Activated CD4-positive, alpha-beta T cell treated with anti-CD3 and anti-CD28 coated beads, Interleukin-2, amount 10 ng/mL, durations not matched to agents 24 days and 14 days (primary cell): ENCODE measurements at regions of chr2 and their contacts with region 1.

Region 1: DNA sequence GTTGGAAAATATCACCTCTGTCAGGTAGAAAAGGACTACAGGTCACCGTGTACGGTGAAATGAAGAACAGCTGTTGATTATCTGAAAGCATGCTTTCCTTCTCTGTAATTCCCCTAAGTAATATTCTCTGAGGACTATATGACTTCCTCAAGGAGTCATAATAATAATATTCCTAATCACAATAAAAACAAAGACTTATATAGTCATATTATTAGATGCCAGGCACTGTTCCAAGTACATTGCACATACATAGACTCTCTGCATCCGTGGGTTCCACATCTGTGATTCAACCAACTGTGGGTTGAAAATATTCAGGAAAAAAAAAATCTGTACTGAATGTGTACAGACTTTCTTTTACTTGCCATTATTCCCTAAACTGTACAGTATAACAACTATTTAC is 512.4 kb upstream of the ID2 start:
- DNase-seq: no peak
- H3K4me3 Mint-ChIP-seq: no peak overlapping the region
- H3K27ac Mint-ChIP-seq: no peak overlapping the region
- H3K4me1 Mint-ChIP-seq: peaks cover 10% of the 10 kb centered on the region
- H3K27me3 Mint-ChIP-seq: no peaks in the 10 kb centered on the region

Region 2: GRCh38 chr2:8234757-8235374 is 65.4 kb after region 1 on chr2:
- intact Hi-C with region 1: loop called (anchors 5 kb)
- DNase-seq: no peak
- H3K4me3 Mint-ChIP-seq: no peak overlapping the region
- H3K27ac Mint-ChIP-seq: no peak overlapping the region
- H3K4me1 Mint-ChIP-seq: peaks cover 22% of the 10 kb centered on the region
- H3K27me3 Mint-ChIP-seq: peaks cover 1% of the 10 kb centered on the region

Region 3: DNA sequence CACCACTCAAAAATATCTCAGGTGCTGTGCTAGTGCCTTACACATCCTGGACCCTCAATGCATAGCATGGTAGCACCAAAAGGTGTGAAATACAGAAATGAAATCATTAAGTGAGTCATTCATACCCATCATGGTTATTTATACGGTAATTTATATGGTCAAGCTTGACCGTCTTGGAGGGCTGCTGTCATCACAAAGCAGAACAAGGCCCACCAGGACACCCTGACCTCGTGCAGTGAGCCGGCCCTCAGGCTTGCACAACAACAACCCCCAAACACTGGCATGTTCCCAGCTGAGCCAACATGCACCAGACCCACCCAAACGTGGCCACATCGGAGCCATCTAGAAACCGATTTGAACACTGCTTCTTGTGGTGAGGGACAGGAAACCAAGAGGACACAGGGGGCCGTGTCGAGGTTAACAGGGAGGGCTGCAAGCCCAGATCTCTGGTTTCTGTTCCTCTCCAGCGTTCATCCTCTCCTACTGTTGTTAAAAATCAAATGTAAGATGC is 133.9 kb after region 1 on chr2:
- intact Hi-C with region 1: no loop called
- DNase-seq: peak; percentile 94
- H3K4me3 Mint-ChIP-seq: peak overlapping the region; percentile 71
- H3K27ac Mint-ChIP-seq: peak overlapping the region; percentile 83
- H3K4me1 Mint-ChIP-seq: peaks cover 72% of the 10 kb centered on the region
- H3K27me3 Mint-ChIP-seq: no peaks in the 10 kb centered on the region